Activated CD8-positive, alpha-beta memory T cell treated with anti-CD3 and anti-CD28 coated beads, Interleukin-2, amount 10 ng/mL, durations not matched to agents 7 days and 5 days (primary cell): ENCODE measurements at regions of chr13 and their contacts with region 1.

Region 1: DNA sequence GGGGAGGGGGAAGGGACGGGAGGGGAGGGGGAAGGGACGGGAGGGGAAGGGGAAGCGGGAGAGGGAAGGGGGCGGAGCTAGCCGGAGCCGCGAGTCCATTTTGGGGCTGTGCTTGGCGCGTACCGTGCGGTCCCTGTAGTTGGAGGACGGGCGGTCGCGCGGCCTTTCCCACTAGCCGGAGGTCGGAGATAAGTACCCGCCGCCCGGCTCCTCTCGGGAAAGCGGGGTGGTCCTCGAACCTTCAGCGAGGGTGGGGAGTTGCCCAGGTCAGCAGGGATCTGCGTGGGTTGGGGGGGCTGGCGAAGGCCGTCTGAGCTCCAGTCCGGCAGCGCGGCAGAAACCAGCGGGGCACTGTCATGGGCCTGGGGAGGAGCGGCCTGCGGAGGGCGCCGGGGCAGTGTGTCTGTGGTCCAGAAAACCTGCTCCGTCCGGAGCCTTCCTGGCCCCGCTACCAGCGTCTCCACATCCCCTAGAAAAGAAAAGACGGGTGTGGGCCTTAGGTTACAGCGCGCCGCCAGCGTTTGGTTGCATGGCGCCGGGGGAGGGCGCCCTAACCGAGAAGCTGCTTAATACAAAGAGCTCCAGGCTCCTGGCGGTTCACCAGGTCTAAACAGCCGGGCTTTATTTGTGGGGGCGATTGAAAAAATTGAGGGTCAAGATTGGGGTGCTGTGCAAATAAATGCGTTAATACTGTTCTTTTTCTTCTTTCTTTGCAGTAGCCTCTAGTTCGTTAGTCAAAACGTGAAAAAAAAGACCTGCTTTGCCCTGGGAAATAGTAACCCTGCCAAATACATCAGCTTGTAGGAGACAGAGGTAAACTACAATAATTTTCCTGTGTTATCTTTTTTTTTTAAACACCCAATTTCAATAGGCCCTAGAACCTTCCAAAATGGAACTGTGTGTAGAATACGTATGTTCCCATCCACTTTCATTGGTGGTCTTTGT is at the start of gene TRIM13:
- DNase-seq: peak; percentile 89
- ATAC-seq: peak; percentile 82
- H3K4me3 Mint-ChIP-seq: peak within 1 kb of the TSS; percentile 77
- H3K27ac Mint-ChIP-seq: peak within 1 kb of the TSS; percentile 87
- H3K4me1 Mint-ChIP-seq: peaks cover 30% of the 10 kb centered on the region
- H3K27me3 Mint-ChIP-seq: no peaks in the 10 kb centered on the region
- total RNA-seq, gene TRIM13: 10.3 to 11.8 TPM

Region 2: DNA sequence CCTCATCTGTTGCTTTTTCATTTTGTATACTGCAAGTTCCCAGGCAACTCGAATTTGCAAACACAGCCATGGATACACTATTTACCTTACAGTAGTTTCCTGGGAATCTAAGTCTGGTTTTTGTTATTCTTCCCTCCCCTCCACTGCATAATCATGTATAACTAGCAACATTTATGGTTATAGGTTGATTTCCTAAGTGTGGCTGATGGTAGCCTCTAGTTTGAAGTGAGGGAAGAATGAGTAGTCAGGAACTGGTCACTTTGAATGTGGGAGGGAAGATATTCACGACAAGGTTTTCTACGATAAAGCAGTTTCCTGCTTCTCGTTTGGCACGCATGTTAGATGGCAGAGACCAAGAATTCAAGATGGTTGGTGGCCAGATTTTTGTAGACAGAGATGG is 18.0 kb after region 1 on chr13 and contains the start of gene KCNRG:
- CTCF ChIA-PET with region 1: interaction called, 16 read pairs
- DNase-seq: no peak
- ATAC-seq: no peak
- H3K4me3 Mint-ChIP-seq: no peak within 1 kb of the TSS
- H3K27ac Mint-ChIP-seq: no peak within 1 kb of the TSS
- H3K4me1 Mint-ChIP-seq: peaks cover 2% of the 10 kb centered on the region
- H3K27me3 Mint-ChIP-seq: no peaks in the 10 kb centered on the region
- total RNA-seq, gene KCNRG: 0.21 TPM in 1 of 2 experiments, not detected in the other

Region 3: DNA sequence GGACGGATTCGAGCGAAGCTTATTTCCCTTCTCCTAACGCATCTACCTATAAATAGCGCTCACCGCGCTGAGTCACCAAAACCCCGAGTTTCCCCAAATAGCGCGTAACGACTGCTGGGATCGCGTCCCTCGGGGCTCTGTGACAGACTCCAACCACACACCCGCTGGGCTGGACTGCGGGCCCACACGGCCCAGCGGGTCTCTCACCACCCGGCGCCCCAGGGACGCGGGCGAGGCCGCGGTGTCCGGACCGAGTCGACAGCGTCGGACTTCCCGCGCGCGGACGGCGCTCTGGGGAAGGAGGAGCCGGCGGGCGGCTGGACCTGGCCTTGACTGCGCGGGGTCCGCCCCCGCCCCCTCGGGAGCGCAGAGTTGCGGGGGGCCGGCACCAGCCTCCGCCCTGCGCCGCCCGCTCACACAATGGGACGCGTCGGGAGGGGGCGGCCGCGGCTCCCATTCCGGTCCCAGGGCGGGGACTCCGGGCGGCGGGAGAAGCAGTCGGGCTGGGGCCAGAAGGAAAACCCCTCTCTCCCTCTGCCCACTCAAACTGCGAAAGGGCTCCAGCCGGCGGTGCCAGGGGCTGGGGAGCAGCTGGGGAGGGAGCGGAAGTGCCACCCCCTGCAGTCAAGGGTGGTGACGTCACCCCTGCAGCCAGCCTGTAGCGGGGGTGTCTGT is 126.8 kb after region 1 on chr13:
- CTCF ChIA-PET with region 1: interaction called, 10 read pairs
- DNase-seq: peak; percentile 80
- ATAC-seq: peak; percentile 79
- H3K4me3 Mint-ChIP-seq: peak overlapping the region; percentile 79
- H3K27ac Mint-ChIP-seq: peak overlapping the region; percentile 82
- H3K4me1 Mint-ChIP-seq: peaks cover 46% of the 10 kb centered on the region
- H3K27me3 Mint-ChIP-seq: peaks cover 20% of the 10 kb centered on the region